Gastrocnemius medialis (tissue), 4 donors: ENCODE measurements at regions of chr5 and their contacts with region 1.

Region 1: DNA sequence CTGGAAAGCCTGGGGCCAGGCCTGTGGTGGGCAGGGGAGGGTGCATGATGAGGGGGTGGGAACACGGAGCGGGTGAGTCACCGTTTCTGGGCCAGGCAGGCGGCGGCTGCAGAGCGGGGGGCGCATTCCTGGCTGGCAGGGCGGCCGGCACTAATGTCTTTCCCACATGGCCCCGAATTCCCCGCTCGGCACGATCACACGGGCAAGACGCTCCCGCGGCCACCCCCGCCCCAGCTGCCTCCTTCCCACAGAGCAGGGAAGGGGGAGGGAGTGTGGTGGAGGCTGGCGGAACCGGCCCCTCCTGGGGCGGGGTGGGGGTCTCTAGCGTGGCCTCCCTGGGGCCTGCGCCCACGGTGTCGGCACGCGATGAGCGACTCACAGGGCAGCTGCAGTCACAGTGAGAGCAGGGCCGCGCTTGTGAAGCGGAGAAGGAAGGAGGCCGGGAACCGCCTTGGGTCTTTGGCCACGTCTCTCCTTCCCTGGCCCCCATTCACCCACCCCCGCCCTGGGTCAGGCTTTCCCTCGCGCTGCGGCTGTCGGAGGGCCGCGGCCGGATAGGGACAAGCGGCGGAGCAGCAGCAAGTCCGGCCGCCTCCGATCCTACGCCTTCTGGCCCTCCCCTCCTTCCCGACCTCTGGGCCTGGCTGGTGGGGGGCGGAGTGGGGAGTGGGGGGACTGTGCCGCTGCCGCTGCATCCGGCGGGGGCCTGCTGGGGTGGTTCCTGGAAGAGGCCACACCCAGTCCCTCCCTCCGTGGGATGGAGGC is 48.9 kb downstream of the CXXC5 start:
- DNase-seq: no peak
- ATAC-seq: peak; percentile 37 to 42
- H3K4me3 ChIP-seq: peak overlapping the region; percentile 49 to 68 (median 60)
- H3K27ac ChIP-seq: peak overlapping the region; percentile 56 to 80 (median 78)
- H3K4me1 ChIP-seq: peaks cover 32 to 42% of the 10 kb centered on the region in 2 donors
- H3K27me3 ChIP-seq: no peaks in the 10 kb centered on the region
- CTCF ChIP-seq: no peak
- POLR2A ChIP-seq: no peak

Region 2: DNA sequence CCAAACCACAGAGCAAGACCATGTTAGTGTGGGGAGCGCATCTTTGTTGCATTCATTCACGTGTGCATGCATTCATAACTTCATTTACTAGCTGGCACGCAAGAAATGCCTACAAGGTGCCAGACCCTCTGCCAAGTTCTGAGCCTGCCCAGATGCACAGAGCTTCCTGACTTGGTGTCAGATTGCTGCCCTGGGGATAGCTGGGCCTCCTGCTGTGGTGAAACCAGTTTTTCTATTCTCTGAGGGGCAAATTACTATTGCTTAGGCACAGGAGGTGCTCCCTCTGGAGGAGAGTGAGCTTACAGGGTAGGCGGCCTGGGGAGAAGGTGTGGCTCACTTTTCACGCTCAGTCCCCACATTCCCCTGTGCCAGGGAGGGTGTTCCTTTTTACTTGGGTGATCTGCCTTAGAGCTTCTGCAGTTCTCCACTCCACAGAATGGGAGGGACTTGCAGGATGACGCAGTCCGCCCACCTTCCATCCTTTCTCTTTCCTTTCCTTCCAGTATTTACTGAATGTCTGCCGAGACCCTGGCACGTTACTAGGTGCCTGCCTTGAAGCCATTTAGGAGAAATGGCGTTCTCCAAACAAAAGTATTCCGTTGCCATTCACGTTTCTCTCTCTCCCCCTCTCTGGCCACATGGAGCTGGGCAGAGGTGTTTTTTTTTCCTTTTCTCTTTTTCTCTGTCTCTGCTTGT is 971.8 kb before region 1 on chr5:
- in situ Hi-C with region 1: no loop called
- intact Hi-C with region 1: no loop called
- DNase-seq: peak; percentile 19 to 66
- ATAC-seq: peak; percentile 69 to 84
- H3K4me3 ChIP-seq: no peak overlapping the region
- H3K27ac ChIP-seq: peak overlapping the region; percentile 14 to 65 (median 38)
- H3K4me1 ChIP-seq: peaks cover 24 to 37% of the 10 kb centered on the region in 2 donors
- H3K27me3 ChIP-seq: no peaks in the 10 kb centered on the region
- CTCF ChIP-seq: peak in 1 of 5 experiments; percentile 33
- POLR2A ChIP-seq: no peak

Region 3: DNA sequence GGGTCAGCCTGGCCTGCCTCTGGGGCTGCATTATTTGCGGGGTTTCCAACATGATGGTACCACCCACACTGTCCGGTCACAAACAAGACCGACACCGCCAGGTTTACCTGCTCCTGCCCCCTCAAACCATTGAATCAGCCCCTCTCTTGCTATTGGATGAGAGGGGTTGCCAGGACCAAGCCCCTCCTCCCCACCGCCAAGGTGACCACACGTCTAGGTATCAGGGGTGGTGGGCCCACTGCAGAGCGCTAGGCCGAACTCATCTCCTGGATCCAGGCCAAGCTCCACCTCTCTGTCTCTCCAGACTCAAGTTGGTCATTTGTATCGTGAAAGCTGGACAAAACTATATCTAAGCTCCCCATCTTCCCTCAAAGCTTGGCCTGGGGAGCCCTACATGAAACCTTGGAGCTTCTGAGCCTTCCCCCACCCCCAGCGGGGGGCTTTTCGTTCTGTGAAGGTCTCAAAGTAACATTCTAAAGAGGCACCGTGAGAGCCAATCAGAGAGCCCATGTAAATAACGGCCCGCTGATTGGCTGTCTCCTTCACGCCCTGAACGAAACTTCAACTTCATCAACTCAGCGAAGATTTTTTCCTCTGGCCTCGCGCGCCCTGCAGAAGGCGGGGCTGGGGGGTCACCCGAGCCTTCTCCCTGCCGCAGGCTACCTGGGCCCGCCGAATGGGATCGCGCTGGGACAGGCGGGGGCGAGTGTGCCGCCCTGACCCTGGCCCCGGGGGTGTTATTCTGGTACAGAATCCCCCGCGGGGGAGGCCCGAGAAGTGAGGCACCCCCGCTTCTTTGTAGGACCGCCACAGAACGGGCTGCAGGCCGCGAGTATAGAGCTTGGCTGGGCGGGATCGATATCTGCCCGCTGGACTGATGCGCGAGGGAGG is 49.0 kb after region 1 on chr5:
- in situ Hi-C with region 1: no loop called
- intact Hi-C with region 1: loop called (anchors 5 kb)
- DNase-seq: peak; percentile 60 to 79
- ATAC-seq: peak; percentile 92 to 94
- H3K4me3 ChIP-seq: peak overlapping the region; percentile 46 to 74 (median 60)
- H3K27ac ChIP-seq: peak overlapping the region; percentile 16 to 44 (median 30)
- H3K4me1 ChIP-seq: peaks cover 24 to 27% of the 10 kb centered on the region in 2 donors
- H3K27me3 ChIP-seq: peaks cover 22 to 23% (median 23%) of the 10 kb centered on the region in 3 donors
- CTCF ChIP-seq: no peak
- POLR2A ChIP-seq: no peak